ENCODE measurements at regions of chr1 and their contacts with region 1.

Region 1: GRCh38 chr1:151156515-151156819 is at the start of gene TNFAIP8L2:
- DNase-seq: peak; percentile 54 to 81 (median 62)
- ATAC-seq: peak; percentile 82 to 85
- H3K4me3 Mint-ChIP-seq: peak within 1 kb of the TSS; percentile 96 to 100 (median 99)
- H3K27ac Mint-ChIP-seq: peak within 1 kb of the TSS; percentile 88 to 98 (median 95)
- H3K4me1 Mint-ChIP-seq: peaks cover 27 to 53% (median 49%) of the 10 kb centered on the region in 4 donors
- H3K27me3 Mint-ChIP-seq: no peaks in the 10 kb centered on the region
- polyA plus RNA-seq, gene TNFAIP8L2: 9.9 to 37.4 (median 11.7) TPM

Region 2: GRCh38 chr1:150561974-150562445 is 594.5 kb before region 1 on chr1:
- POLR2A ChIA-PET with region 1: interaction called, 10 read pairs
- DNase-seq: peak; percentile 71 to 87 (median 82)
- ATAC-seq: peak; percentile 24 to 48
- H3K4me3 Mint-ChIP-seq: peak overlapping the region; percentile 92 to 100 (median 96)
- H3K27ac Mint-ChIP-seq: peak overlapping the region; percentile 97 to 100 (median 99)
- H3K4me1 Mint-ChIP-seq: peaks cover 28 to 62% (median 58%) of the 10 kb centered on the region in 4 donors
- H3K27me3 Mint-ChIP-seq: no peaks in the 10 kb centered on the region

Region 3: GRCh38 chr1:151047925-151048645 is 108.4 kb before region 1 on chr1:
- POLR2A ChIA-PET with region 1: interaction called, 13 read pairs
- DNase-seq: peak; percentile 37 to 80 (median 60)
- ATAC-seq: peak; percentile 73 to 83
- H3K4me3 Mint-ChIP-seq: peak overlapping the region; percentile 88 to 94 (median 93)
- H3K27ac Mint-ChIP-seq: peak overlapping the region; percentile 70 to 99 (median 93)
- H3K4me1 Mint-ChIP-seq: peaks cover 26 to 76% (median 73%) of the 10 kb centered on the region in 4 donors
- H3K27me3 Mint-ChIP-seq: no peaks in the 10 kb centered on the region

Region 4: GRCh38 chr1:151070474-151071276 is 85.8 kb before region 1 on chr1 and contains the start of gene GABPB2:
- POLR2A ChIA-PET with region 1: interaction called, 22 read pairs
- DNase-seq: peak; percentile 80 to 95 (median 86)
- ATAC-seq: peak; percentile 82
- H3K4me3 Mint-ChIP-seq: peak within 1 kb of the TSS; percentile 95 to 100 (median 100)
- H3K27ac Mint-ChIP-seq: peak within 1 kb of the TSS; percentile 98 to 100 (median 100)
- H3K4me1 Mint-ChIP-seq: peaks cover 12 to 42% (median 31%) of the 10 kb centered on the region in 4 donors
- H3K27me3 Mint-ChIP-seq: no peaks in the 10 kb centered on the region
- polyA plus RNA-seq, gene GABPB2: 4.8 to 16.4 (median 5.4) TPM

Region 5: GRCh38 chr1:151130987-151131586 is 25.4 kb before region 1 on chr1:
- POLR2A ChIA-PET with region 1: interaction called, 24 read pairs
- DNase-seq: peak; percentile 74 to 94 (median 87)
- ATAC-seq: peak; percentile 100
- H3K4me3 Mint-ChIP-seq: peak overlapping the region; percentile 76 to 91 (median 84)
- H3K27ac Mint-ChIP-seq: peak overlapping the region; percentile 69 to 97 (median 92)
- H3K4me1 Mint-ChIP-seq: peaks cover 0 to 13% (median 12%) of the 10 kb centered on the region in 4 donors
- H3K27me3 Mint-ChIP-seq: no peaks in the 10 kb centered on the region

Region 6: GRCh38 chr1:151189638-151190445 is 33.4 kb after region 1 on chr1 and contains the start of gene VPS72:
- POLR2A ChIA-PET with region 1: interaction called, 41 read pairs
- DNase-seq: peak; percentile 75 to 91 (median 82)
- ATAC-seq: peak; percentile 92 to 93
- H3K4me3 Mint-ChIP-seq: peak within 1 kb of the TSS; percentile 91 to 100 (median 99)
- H3K27ac Mint-ChIP-seq: peak within 1 kb of the TSS; percentile 96 to 100 (median 98)
- H3K4me1 Mint-ChIP-seq: peaks cover 14 to 43% (median 33%) of the 10 kb centered on the region in 4 donors
- H3K27me3 Mint-ChIP-seq: no peaks in the 10 kb centered on the region
- polyA plus RNA-seq, gene VPS72: 69.7 to 79.1 (median 70.9) TPM

Region 7: DNA sequence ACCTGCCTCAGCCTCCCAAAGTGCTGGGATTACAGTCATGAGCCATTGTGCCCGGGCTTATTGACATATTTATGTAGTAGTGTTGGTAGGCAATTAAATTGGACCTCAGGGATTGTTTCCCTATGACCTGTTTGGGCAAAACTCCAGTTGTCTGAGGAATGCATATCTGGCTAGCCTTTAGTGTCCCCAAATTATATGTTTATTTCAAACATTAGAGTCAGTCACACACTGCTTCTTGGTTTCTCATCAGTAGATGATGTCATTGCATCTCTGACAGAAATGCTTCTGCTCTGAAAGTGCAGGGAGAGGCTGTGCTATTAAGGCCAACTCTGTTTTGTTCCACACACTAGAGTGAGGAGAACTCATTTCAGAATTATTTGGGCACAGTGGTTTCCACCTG is 54.4 kb after region 1 on chr1:
- POLR2A ChIA-PET with region 1: no interaction called
- DNase-seq: no peak
- ATAC-seq: no peak
- H3K4me3 Mint-ChIP-seq: peak overlapping the region in 1 of 10 donors; percentile 15
- H3K27ac Mint-ChIP-seq: peak overlapping the region in 3 of 10 donors; percentile 5 to 92 (median 11)
- H3K4me1 Mint-ChIP-seq: peaks cover 6 to 39% (median 19%) of the 10 kb centered on the region in 4 donors
- H3K27me3 Mint-ChIP-seq: no peaks in the 10 kb centered on the region

Measured in naive thymus-derived CD8-positive, alpha-beta T cell (primary cell).